RWPE1 (cell line): ENCODE measurements at regions of chr17 and their contacts with region 1.

Region 1: GRCh38 chr17:37570527-37571093 is 38.6 kb downstream of the SYNRG start:
- DNase-seq: peak; percentile 94
- H3K27ac ChIP-seq: no peak overlapping the region
- CTCF ChIP-seq: peak; percentile 75

Region 2: GRCh38 chr17:37527249-37527851 is 43.3 kb before region 1 on chr17:
- CTCF ChIA-PET with region 1: interaction called, 15 read pairs
- POLR2A ChIA-PET with region 1: no interaction called
- DNase-seq: peak; percentile 66
- H3K27ac ChIP-seq: no peak overlapping the region
- CTCF ChIP-seq: peak; percentile 81

Region 3: GRCh38 chr17:37849617-37849972 is 279.0 kb after region 1 on chr17:
- CTCF ChIA-PET with region 1: no interaction called
- POLR2A ChIA-PET with region 1: no interaction called
- DNase-seq: no peak
- H3K27ac ChIP-seq: no peak overlapping the region
- CTCF ChIP-seq: no peak